ENCODE measurements at regions of chr10 and their contacts with region 1.

Region 1: GRCh38 chr10:16392531-16393069 is 44.2 kb upstream of the PTER start:
- DNase-seq: no peak
- ATAC-seq: no peak
- H3K4me3 ChIP-seq: no peak overlapping the region
- H3K27ac ChIP-seq: no peak overlapping the region
- H3K4me1 ChIP-seq: no peaks in the 10 kb centered on the region
- H3K27me3 ChIP-seq: no peaks in the 10 kb centered on the region
- CTCF ChIP-seq: no peak
- POLR2A ChIP-seq: no peak
- RAD21 ChIP-seq: no peak

Region 2: DNA sequence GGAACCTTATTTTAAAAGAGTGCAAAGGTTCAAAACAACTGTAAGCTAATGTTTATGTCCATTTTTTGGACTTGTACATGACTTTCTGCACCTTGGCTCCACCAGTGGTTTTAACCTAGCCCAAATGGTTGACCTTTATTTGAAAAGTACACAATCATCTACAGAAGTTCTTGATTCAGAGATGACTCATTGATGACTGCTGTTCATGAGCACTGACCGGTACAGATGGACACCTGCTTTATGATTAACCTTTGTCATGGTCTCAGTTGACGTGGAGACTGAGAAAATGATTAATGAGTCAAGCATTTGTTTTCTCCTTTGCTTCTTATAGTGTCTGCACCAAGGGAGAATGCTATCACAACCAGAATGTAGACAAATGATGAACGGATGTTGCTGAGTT is 11.5 kb before region 1 on chr10:
- CTCF ChIA-PET with region 1: no interaction called
- POLR2A ChIA-PET with region 1: interaction called, 26 read pairs
- dilution Hi-C with region 1: no loop called
- in situ Hi-C with region 1: no loop called
- intact Hi-C with region 1: no loop called
- DNase-seq: no peak
- ATAC-seq: no peak
- H3K4me3 ChIP-seq: no peak overlapping the region
- H3K27ac ChIP-seq: no peak overlapping the region
- H3K4me1 ChIP-seq: no peaks in the 10 kb centered on the region
- H3K27me3 ChIP-seq: no peaks in the 10 kb centered on the region
- CTCF ChIP-seq: no peak
- POLR2A ChIP-seq: no peak
- RAD21 ChIP-seq: no peak

Region 3: GRCh38 chr10:17088118-17088806 is 695.7 kb after region 1 on chr10:
- CTCF ChIA-PET with region 1: no interaction called
- POLR2A ChIA-PET with region 1: no interaction called
- dilution Hi-C with region 1: no loop called
- in situ Hi-C with region 1: no loop called
- intact Hi-C with region 1: no loop called
- DNase-seq: peak; percentile 82
- ATAC-seq: peak; percentile 94
- H3K4me3 ChIP-seq: no peak overlapping the region
- H3K27ac ChIP-seq: no peak overlapping the region
- H3K4me1 ChIP-seq: peaks cover 7% of the 10 kb centered on the region
- H3K27me3 ChIP-seq: no peaks in the 10 kb centered on the region
- CTCF ChIP-seq: no peak
- POLR2A ChIP-seq: no peak
- RAD21 ChIP-seq: no peak